ENCODE measurements at regions of chr11 and their contacts with region 1.

Region 1: GRCh38 chr11:62665075-62665598 is at the starts of genes C11orf98 and CSKMT:
- DNase-seq: peak; percentile 89 to 98 (median 96)
- ATAC-seq: peak; percentile 89 to 91
- H3K4me3 Mint-ChIP-seq: peak within 1 kb of the TSS; percentile 94 to 98 (median 95)
- H3K27ac Mint-ChIP-seq: peak within 1 kb of the TSS; percentile 86 to 97 (median 96)
- H3K4me1 Mint-ChIP-seq: peaks cover 22 to 49% (median 42%) of the 10 kb centered on the region in 4 donors
- H3K27me3 Mint-ChIP-seq: no peaks in the 10 kb centered on the region
- polyA plus RNA-seq, gene C11orf98: 99.9 to 149 (median 117) TPM
- polyA plus RNA-seq, gene CSKMT: 1.8 to 3.7 (median 3.4) TPM

Region 2: DNA sequence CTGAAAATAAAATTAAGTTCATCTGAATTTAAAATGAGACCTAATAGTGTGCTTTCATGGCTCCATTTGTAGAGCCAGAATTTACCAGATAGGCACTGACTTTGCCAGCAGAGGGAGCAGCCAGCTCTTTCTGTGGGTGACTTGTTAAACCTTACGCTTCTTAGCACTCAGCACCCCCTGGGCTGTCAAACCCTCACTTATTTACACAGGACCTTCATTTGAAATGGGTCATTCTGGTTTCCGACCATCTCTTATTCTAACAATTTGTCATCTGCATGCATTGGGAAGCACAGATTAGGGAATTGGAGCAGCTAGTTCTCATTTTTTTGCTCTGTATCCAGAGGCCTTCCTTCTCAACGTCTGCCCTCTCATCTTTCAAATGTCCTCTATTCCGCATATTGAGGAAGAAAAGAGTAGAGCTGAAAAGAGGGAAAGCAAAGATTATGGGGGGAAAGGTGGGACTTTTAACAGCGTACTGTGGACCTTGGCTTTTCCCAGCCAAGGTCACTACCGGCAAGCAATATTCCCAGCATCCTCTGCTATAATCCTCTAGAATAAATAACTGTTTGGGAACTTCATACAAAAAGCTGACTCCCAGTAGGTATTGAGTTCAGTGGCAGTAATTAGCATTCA is 324.8 kb before region 1 on chr11:
- POLR2A ChIA-PET with region 1: no interaction called
- DNase-seq: peak; percentile 9 to 80 (median 50)
- ATAC-seq: peak; percentile 56 to 62
- H3K4me3 Mint-ChIP-seq: peak overlapping the region in 1 of 10 donors; percentile 53
- H3K27ac Mint-ChIP-seq: peak overlapping the region in 2 of 10 donors; percentile 21 to 57
- H3K4me1 Mint-ChIP-seq: peaks cover 11 to 24% (median 20%) of the 10 kb centered on the region in 4 donors
- H3K27me3 Mint-ChIP-seq: peaks cover 0 to 5% (median 0%) of the 10 kb centered on the region in 5 donors

Region 3: GRCh38 chr11:62439785-62440602 is 225.1 kb before region 1 on chr11:
- POLR2A ChIA-PET with region 1: no interaction called
- DNase-seq: no peak
- ATAC-seq: no peak
- H3K4me3 Mint-ChIP-seq: no peak overlapping the region
- H3K27ac Mint-ChIP-seq: peak overlapping the region in 1 of 10 donors; percentile 33
- H3K4me1 Mint-ChIP-seq: peaks cover 9 to 33% (median 20%) of the 10 kb centered on the region in 4 donors
- H3K27me3 Mint-ChIP-seq: peaks cover 0 to 8% (median 2%) of the 10 kb centered on the region in 5 donors

Region 4: DNA sequence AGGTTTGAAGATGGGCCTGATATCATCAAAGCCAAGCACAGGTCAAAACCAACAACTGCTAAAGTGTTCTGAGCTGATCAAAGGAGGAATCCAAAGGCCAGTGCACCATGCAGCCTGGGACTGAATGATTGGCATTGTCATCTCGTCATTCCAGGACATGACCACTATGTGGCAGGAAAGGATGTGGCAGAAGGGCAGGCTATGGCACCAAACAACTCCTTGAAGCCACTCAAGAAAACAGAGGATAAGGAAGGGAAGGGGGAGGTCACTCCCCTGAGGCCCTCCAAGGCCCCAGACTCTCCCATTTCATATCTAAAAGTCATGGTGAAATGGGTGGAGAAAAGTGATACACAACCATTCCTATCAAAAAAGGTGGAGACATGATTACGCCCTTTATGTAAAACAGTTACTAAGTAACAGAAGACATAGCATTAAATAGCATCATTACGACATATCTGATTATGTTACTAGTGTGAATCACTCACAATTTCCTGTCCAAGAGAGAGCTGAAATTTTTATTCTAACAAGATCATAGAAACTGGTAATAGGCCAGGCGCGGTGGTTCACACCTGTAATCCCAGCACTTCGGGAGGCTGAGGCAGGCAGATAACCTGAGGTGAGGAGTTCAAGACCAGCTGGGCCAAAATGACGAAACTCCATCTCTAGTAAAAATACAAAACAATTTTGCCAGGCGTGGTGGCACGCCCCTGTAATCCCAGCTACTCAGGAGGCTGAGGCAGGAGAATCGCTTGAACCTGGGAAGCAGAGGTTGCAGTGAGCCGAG is 167.8 kb before region 1 on chr11:
- POLR2A ChIA-PET with region 1: no interaction called
- DNase-seq: peak in 2 of 10 donors; percentile 8 to 9
- ATAC-seq: peak; percentile 20 to 52
- H3K4me3 Mint-ChIP-seq: no peak overlapping the region
- H3K27ac Mint-ChIP-seq: peak overlapping the region in 2 of 10 donors; percentile 3 to 14
- H3K4me1 Mint-ChIP-seq: peaks cover 0 to 11% (median 1%) of the 10 kb centered on the region in 4 donors
- H3K27me3 Mint-ChIP-seq: peaks cover under 1 to 9% (median 7%) of the 10 kb centered on the region in 5 donors

Region 5: GRCh38 chr11:62556108-62556871 is 108.8 kb before region 1 on chr11:
- POLR2A ChIA-PET with region 1: interaction called, 17 read pairs
- DNase-seq: peak; percentile 57 to 94 (median 80)
- ATAC-seq: peak; percentile 50 to 56
- H3K4me3 Mint-ChIP-seq: peak overlapping the region; percentile 61 to 90 (median 86)
- H3K27ac Mint-ChIP-seq: peak overlapping the region; percentile 97 to 100 (median 99)
- H3K4me1 Mint-ChIP-seq: peaks cover 50 to 98% (median 88%) of the 10 kb centered on the region in 4 donors
- H3K27me3 Mint-ChIP-seq: peaks cover 0 to 2% (median 0%) of the 10 kb centered on the region in 5 donors

Region 6: GRCh38 chr11:62612366-62613290 is 52.5 kb before region 1 on chr11 and contains the starts of genes EML3 and ROM1:
- POLR2A ChIA-PET with region 1: interaction called, 65 read pairs
- DNase-seq: peak; percentile 79 to 94 (median 88)
- ATAC-seq: peak; percentile 74 to 78
- H3K4me3 Mint-ChIP-seq: peak within 1 kb of the TSS; percentile 91 to 98 (median 94)
- H3K27ac Mint-ChIP-seq: peak within 1 kb of the TSS; percentile 96 to 99 (median 98)
- H3K4me1 Mint-ChIP-seq: peaks cover 32 to 59% (median 57%) of the 10 kb centered on the region in 4 donors
- H3K27me3 Mint-ChIP-seq: no peaks in the 10 kb centered on the region
- polyA plus RNA-seq, gene EML3: 14.8 to 23.7 (median 15.7) TPM
- polyA plus RNA-seq, gene ROM1: 0.82 to 1.9 (median 1.8) TPM

Region 7: GRCh38 chr11:62645956-62646824 is 18.9 kb before region 1 on chr11 and contains the start of gene GANAB:
- POLR2A ChIA-PET with region 1: interaction called, 541 read pairs
- DNase-seq: peak; percentile 94 to 99 (median 97)
- ATAC-seq: peak; percentile 97 to 98
- H3K4me3 Mint-ChIP-seq: peak within 1 kb of the TSS; percentile 92 to 99 (median 97)
- H3K27ac Mint-ChIP-seq: peak within 1 kb of the TSS; percentile 90 to 99 (median 98)
- H3K4me1 Mint-ChIP-seq: peaks cover 9 to 50% (median 32%) of the 10 kb centered on the region in 4 donors
- H3K27me3 Mint-ChIP-seq: no peaks in the 10 kb centered on the region
- polyA plus RNA-seq, gene GANAB: 171 to 197 (median 174) TPM

Region 8: DNA sequence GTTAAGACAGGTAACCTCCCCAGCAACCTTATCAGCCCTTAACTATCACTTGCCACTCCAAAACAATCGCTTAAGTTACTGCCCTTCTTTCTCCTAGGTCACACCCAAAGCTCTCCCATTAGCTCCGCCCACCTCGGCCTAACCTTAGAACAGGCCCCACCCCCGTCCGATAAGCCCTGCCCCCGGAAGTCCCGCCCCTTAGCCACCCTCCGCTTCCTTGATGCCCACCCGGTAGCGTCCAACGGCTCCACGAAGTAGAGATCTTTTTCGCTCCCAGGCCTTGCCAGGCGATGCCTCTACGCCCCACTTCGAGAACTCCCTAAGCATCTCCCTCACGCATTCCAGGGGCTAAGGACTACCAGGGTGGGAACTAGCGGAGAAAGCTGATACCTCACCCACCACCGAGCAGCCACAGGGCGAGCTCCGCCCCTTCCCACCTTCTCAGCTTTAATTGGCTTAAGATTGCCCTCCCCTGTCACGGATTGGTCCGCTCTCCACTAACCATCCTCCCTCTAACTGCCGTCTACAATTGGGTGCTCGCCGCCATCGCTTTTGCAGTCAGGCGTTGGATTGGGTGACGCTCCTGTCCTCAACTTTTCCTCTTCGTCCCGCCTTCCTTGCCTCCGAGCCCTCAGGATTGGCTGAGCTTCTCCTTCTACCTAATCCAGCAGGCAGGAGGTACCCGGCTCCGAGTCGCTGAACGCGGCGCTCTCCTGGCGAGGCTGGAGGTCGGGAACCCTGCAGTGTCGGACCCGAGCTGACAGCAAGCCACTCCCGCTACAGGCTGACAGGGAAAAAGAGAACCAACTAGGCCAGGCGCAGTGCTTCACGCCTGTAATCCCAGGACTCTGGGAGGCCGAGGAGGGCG is 88.8 kb after region 1 on chr11 and contains the start of gene ZBTB3:
- POLR2A ChIA-PET with region 1: interaction called, 19 read pairs
- DNase-seq: peak; percentile 93 to 100 (median 96)
- ATAC-seq: peak; percentile 95 to 96
- H3K4me3 Mint-ChIP-seq: peak within 1 kb of the TSS; percentile 91 to 100 (median 97)
- H3K27ac Mint-ChIP-seq: peak within 1 kb of the TSS; percentile 88 to 100 (median 99)
- H3K4me1 Mint-ChIP-seq: peaks cover 8 to 43% (median 28%) of the 10 kb centered on the region in 4 donors
- H3K27me3 Mint-ChIP-seq: no peaks in the 10 kb centered on the region
- polyA plus RNA-seq, gene ZBTB3: 2.1 to 6.7 (median 3.6) TPM

Region 9: GRCh38 chr11:62880803-62881578 is 215.9 kb after region 1 on chr11 and contains the start of gene SLC3A2:
- POLR2A ChIA-PET with region 1: interaction called, 15 read pairs
- DNase-seq: peak; percentile 77 to 90 (median 84)
- ATAC-seq: peak; percentile 81 to 82
- H3K4me3 Mint-ChIP-seq: peak within 1 kb of the TSS; percentile 96 to 100 (median 99)
- H3K27ac Mint-ChIP-seq: peak within 1 kb of the TSS; percentile 97 to 100 (median 100)
- H3K4me1 Mint-ChIP-seq: peaks cover 33 to 53% (median 51%) of the 10 kb centered on the region in 4 donors
- H3K27me3 Mint-ChIP-seq: no peaks in the 10 kb centered on the region
- polyA plus RNA-seq, gene SLC3A2: 119 to 164 (median 125) TPM

Region 10: DNA sequence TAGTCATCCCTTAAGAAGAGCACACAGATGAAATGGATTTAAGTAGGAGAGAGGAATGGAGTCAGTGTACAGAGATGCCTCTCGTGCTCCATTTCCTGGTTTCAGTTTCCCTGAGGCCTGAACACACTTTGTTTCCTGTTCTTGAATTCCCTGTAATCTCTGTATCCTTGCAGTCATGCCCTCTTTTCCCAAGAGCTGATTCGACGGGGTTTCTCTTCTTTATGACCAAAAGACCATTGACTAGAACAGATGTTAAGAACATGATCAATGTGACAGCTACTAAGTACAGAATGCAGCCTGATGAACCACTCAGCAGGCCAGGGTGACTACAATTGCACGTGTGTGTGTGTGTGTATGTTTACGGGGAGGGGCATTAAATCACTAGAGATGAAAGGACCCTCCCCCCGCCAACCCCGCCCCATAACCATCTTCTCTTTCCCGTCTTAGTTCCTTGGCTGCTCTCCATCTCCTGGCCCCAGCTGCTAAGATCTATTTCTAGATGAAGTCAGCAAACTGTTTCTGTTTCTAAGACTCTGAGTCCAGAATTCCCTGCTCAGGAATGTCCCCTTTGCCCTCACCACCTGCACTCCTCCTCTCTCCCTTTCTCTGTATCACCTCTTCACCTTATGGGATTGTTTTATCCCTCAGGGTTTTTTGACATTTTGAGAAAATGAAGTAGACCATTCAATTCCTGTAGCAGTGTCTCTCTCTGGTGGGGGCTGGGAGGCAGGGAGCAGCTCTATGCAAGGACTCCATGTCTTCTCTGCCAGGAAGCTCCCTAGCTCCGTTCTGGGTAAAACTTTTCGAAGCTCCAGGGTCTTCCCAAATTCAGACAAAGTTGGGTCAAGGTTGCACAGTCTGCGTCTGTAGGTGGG is 293.6 kb after region 1 on chr11:
- POLR2A ChIA-PET with region 1: no interaction called
- DNase-seq: no peak
- ATAC-seq: no peak
- H3K4me3 Mint-ChIP-seq: no peak overlapping the region
- H3K27ac Mint-ChIP-seq: no peak overlapping the region
- H3K4me1 Mint-ChIP-seq: peaks cover 0 to 4% (median 0%) of the 10 kb centered on the region in 4 donors
- H3K27me3 Mint-ChIP-seq: peaks cover 3 to 10% (median 7%) of the 10 kb centered on the region in 5 donors

Measured in naive thymus-derived CD8-positive, alpha-beta T cell (primary cell).